Ascending aorta (tissue), 2 donors: ENCODE measurements at regions of chr22 and their contacts with region 1.

Region 1: GRCh38 chr22:22848364-22848866 is 39.2 kb upstream of the IGLL5 start:
- DNase-seq: no peak
- H3K4me3 ChIP-seq: no peak overlapping the region
- H3K27ac ChIP-seq: no peak overlapping the region
- H3K4me1 ChIP-seq: no peaks in the 10 kb centered on the region
- H3K27me3 ChIP-seq: no peaks in the 10 kb centered on the region
- CTCF ChIP-seq: peak; percentile 58 to 79 (median 65)

Region 2: GRCh38 chr22:23128269-23129108 is 280.1 kb after region 1 on chr22:
- intact Hi-C with region 1: loop called (anchors 5 kb)
- DNase-seq: peak in 1 of 2 donors; percentile 81
- H3K4me3 ChIP-seq: no peak overlapping the region
- H3K27ac ChIP-seq: no peak overlapping the region
- H3K4me1 ChIP-seq: no peaks in the 10 kb centered on the region
- H3K27me3 ChIP-seq: no peaks in the 10 kb centered on the region
- CTCF ChIP-seq: peak; percentile 66 to 84 (median 81)